ENCODE measurements at regions of chr9 and their contacts with region 1.

Region 1: DNA sequence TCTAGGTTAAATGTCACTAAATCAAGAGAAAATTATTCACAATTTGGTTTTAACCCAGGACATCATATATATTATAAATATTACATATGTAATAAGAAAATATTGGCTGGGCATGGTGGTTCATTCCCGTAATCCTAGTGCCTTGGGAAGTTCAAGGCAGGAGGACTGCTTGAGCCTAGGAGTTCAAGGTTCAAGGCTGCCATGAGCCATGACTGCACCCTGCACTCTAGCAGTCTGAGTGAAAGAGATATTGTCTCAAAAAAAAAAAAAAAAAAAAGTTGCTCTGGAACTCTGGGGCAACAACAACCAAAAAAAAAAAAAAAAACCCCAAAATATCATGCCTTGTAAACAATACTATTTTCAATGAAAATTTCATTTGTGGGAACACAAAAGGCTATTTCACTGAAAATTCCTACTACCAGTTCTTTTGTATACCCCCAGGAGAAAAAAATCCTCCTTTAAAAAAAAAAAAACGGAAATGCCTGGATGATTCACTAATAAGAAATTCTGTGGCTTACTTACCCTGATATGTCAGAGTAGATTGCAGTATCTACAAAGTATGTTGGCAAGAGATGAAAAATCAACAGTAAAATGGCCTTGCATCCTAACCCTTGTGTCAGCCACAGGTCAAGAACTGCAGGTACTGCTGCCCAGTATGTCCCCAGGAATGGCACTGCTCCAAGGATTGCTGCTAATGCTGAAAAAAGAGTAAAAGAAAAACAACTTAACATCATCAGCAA is 22.6 kb upstream of the CTNNAL1 start:
- DNase-seq: peak; percentile 86
- ATAC-seq: peak; percentile 79
- H3K4me3 ChIP-seq: 0 out of 2 replicates have a peak overlapping the region, but pooled peaks have one; percentile 13
- H3K27ac ChIP-seq: peak overlapping the region; percentile 78
- H3K4me1 ChIP-seq: peaks cover 67% of the 10 kb centered on the region
- H3K27me3 ChIP-seq: no peaks in the 10 kb centered on the region
- CTCF ChIP-seq: no peak

Region 2: DNA sequence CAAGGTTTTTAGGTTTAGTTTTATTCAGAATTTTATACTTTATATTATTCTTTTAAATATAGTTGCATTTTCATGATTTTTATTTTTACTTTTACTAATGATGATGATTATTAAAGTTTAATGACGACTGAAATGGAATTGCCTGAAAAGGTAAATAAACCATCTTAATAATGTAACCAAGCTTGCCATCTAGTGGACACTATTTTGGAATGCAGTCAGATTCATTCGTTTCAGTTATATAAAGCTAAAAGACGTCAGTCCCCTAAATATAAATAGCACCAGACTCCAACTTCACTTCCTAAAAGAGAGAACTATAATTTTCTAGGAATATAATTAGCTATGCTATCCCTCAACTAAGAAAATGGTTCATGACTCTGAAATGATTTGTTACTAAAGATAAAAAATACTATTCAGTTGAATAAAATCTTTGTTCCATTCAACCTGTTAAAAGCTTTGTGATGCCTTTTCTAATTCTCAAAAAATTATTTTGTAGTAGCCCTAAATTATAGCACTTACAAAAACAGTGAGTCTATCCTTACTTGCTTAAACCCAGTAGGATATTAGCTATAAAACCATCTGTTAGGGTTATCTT is 81.8 kb before region 1 on chr9:
- CTCF ChIA-PET with region 1: no interaction called
- POLR2A ChIA-PET with region 1: no interaction called
- intact Hi-C with region 1: loop called (anchors 10 kb)
- DNase-seq: peak; percentile 67
- ATAC-seq: no peak
- H3K4me3 ChIP-seq: no peak overlapping the region
- H3K27ac ChIP-seq: no peak overlapping the region
- H3K4me1 ChIP-seq: peaks cover 16% of the 10 kb centered on the region
- H3K27me3 ChIP-seq: no peaks in the 10 kb centered on the region
- CTCF ChIP-seq: peak; percentile 60

Region 3: GRCh38 chr9:109022873-109023272 is 13.0 kb before region 1 on chr9:
- CTCF ChIA-PET with region 1: no interaction called
- POLR2A ChIA-PET with region 1: no interaction called
- intact Hi-C with region 1: loop called (anchors 1 kb)
- DNase-seq: peak; percentile 86
- ATAC-seq: peak; percentile 86
- H3K4me3 ChIP-seq: no peak overlapping the region
- H3K27ac ChIP-seq: peak overlapping the region; percentile 49; the same call in 1 of the 2 replicates
- H3K4me1 ChIP-seq: peaks cover 25% of the 10 kb centered on the region
- H3K27me3 ChIP-seq: no peaks in the 10 kb centered on the region
- CTCF ChIP-seq: no peak

Region 4: GRCh38 chr9:109198736-109199379 is 163.0 kb after region 1 on chr9:
- CTCF ChIA-PET with region 1: no interaction called
- POLR2A ChIA-PET with region 1: no interaction called
- intact Hi-C with region 1: no loop called
- DNase-seq: peak; percentile 28
- ATAC-seq: no peak
- H3K4me3 ChIP-seq: no peak overlapping the region
- H3K27ac ChIP-seq: no peak overlapping the region
- H3K4me1 ChIP-seq: no peaks in the 10 kb centered on the region
- H3K27me3 ChIP-seq: no peaks in the 10 kb centered on the region
- CTCF ChIP-seq: peak; percentile 45; the same call in 1 of the 2 replicates